ENCODE measurements at regions of chr4 and their contacts with region 1.

Region 1: GRCh38 chr4:153204247-153205027 is at the start of gene TRIM2:
- DNase-seq: peak; percentile 70
- ATAC-seq: peak; percentile 14
- H3K4me3 ChIP-seq: peak within 1 kb of the TSS; percentile 59
- H3K27ac ChIP-seq: peak within 1 kb of the TSS; percentile 96
- H3K4me1 ChIP-seq: peaks cover 30% of the 10 kb centered on the region
- H3K27me3 ChIP-seq: no peaks in the 10 kb centered on the region
- CTCF ChIP-seq: no peak
- total RNA-seq, gene TRIM2: 18.9 and 20.2 TPM in 2 replicates

Region 2: DNA sequence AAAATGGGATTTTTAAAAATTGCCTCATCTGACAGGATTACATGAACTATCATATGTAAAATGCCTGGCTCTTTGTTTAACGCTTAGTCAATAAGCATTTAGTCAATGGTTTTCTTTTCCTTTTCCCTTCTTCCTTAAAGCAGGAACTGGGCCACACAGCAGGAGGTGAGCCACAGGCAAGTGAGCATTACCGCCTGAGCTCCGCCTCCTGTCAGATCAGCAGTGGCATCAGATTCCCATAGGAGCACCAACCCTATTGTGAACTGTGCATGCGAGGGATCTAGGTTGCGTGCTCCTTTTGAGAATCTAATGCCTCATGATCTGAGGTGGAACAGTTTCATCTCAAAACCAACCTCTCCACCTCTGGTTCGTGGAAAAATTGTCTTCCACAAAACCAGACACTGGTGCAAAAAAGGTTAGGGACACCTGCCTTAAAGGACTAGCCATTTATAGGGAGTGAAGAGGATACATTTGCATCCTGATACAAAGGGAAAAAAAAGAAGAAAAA is 974.6 kb before region 1 on chr4:
- CTCF ChIA-PET with region 1: no interaction called
- POLR2A ChIA-PET with region 1: no interaction called
- intact Hi-C with region 1: no loop called
- DNase-seq: no peak
- ATAC-seq: no peak
- H3K4me3 ChIP-seq: no peak overlapping the region
- H3K27ac ChIP-seq: no peak overlapping the region
- H3K4me1 ChIP-seq: no peaks in the 10 kb centered on the region
- H3K27me3 ChIP-seq: no peaks in the 10 kb centered on the region
- CTCF ChIP-seq: no peak

Region 3: DNA sequence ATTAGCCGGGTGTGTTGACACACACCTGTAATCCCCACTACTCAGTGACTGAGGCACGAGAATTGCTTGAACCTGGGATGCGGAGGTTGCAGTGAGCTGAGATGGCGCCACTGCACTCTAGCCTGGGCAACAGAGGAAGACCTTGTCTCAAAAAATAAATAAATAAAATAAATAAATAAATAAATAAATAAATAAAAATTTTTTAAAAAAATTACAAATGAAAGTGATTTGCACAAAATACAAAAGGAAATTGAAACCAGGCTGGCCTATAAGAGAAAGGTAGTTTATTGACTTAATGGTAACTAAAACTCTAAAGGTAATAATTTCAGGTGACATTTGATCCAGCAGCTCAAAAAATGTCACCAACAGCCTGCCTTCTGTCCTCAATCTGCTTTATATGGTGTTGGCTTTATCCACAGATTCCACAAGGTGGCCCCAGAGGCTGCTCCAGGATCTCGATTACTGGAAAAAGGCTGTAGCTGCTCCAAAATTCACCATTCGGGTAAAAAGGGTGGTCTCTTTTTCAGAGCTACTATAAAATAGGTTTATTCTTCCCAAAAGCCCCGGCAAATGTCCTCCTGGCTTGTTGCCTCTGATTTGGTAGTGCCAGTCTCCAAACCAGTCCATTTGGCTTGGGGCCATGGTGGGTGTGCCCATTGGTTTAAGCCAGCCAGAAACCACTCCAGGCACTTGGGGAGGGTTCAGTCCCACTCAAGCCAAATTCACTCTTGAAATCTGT is 61.6 kb before region 1 on chr4:
- CTCF ChIA-PET with region 1: no interaction called
- POLR2A ChIA-PET with region 1: no interaction called
- intact Hi-C with region 1: loop called (anchors 1 kb)
- DNase-seq: peak; percentile 70
- ATAC-seq: peak; percentile 58
- H3K4me3 ChIP-seq: peak overlapping the region; percentile 1; the same call in 1 of the 2 replicates
- H3K27ac ChIP-seq: no peak overlapping the region
- H3K4me1 ChIP-seq: peaks cover 24% of the 10 kb centered on the region
- H3K27me3 ChIP-seq: no peaks in the 10 kb centered on the region
- CTCF ChIP-seq: peak; percentile 87

Region 4: DNA sequence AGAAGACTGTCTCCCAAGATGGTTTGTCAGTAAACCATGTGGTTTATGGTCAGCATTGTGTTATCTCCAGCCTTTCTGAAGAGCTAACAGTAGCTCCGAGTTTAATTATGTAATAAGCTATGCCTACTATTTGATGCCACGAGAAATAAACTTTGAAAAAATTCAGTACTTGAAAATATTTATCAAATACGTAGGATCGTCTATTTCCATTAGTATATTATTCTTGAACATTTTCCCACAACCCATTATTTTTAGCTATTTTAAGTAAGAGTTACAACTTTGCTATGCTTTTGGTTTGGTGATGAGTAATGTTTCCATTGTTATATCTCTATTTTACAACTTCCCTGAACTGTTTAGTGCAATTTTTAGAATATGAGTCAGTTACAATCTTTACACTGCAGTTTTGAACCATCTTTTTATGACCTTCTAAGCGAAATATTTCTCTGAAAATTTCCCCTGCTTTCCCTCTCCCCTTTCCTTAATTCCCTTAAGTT is 44.7 kb before region 1 on chr4:
- CTCF ChIA-PET with region 1: no interaction called
- POLR2A ChIA-PET with region 1: no interaction called
- intact Hi-C with region 1: loop called (anchors 1 kb)
- DNase-seq: peak; percentile 72
- ATAC-seq: peak; percentile 89
- H3K4me3 ChIP-seq: no peak overlapping the region; the same call in 1 of the 2 replicates
- H3K27ac ChIP-seq: peak overlapping the region; percentile 61
- H3K4me1 ChIP-seq: peaks cover 19% of the 10 kb centered on the region
- H3K27me3 ChIP-seq: no peaks in the 10 kb centered on the region
- CTCF ChIP-seq: no peak

Region 5: GRCh38 chr4:153318696-153319320 is 114.4 kb after region 1 on chr4:
- CTCF ChIA-PET with region 1: no interaction called
- POLR2A ChIA-PET with region 1: no interaction called
- intact Hi-C with region 1: loop called (anchors 1 kb)
- DNase-seq: peak; percentile 66
- ATAC-seq: peak; percentile 65
- H3K4me3 ChIP-seq: no peak overlapping the region
- H3K27ac ChIP-seq: no peak overlapping the region
- H3K4me1 ChIP-seq: no peaks in the 10 kb centered on the region
- H3K27me3 ChIP-seq: no peaks in the 10 kb centered on the region
- CTCF ChIP-seq: peak; percentile 77